HEK293 (cell line): ENCODE measurements at regions of chrX and their contacts with region 1.

Region 1: DNA sequence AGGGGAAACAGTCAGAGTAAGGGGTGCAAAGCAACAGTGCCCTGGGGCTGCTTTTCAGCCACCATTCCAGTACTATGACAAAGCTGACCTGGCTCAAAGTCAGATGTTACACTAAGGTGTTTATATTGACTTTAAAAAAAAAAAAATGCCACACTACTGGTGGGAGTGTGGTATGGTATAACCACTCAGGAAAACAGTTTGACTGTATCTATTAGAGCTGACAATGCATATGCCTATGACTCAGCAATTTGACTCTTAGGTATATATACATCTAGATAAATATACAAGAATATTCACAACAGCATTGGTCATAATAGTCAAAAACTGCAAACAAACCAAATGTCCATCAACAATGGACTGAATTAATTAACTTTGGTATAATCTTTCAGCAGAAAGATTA is 15.0 kb downstream of the ASB9 start:
- H3K4me3 ChIP-seq: no peak overlapping the region
- H3K27ac ChIP-seq: no peak overlapping the region
- H3K4me1 ChIP-seq: no peaks in the 10 kb centered on the region
- CTCF ChIP-seq: no peak

Region 2: DNA sequence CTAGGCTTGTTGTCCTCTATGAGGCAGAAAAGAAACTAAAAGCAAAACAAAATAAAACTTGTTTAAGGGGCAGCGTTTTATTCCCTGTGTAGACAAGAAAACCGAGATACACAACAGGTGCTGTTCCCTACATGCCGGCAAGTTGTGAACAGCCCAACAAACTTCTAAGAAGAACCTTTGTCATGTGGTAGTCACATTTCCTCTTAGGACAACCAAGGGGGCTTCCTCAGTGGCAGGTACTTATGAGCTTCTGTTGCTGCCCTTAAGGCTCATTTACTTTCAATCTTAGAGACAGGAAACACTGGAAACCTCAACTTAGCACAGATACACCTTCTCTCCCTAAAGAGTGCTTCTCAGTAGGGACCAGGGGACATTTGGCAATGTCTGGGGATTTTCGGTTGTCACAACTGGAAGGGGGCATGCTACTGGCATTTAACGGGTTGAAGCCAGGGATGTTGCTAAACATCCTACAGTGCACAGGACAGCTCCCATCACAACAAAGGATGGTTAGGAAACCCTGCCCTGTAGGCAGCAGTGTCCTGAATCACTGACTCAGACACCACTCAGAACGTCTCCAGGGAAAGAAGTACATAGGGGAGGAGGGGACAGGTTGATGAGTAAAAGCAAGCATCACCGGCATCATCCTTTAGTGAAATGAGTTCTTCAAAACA is 96.0 kb before region 1 on chrX:
- CTCF ChIA-PET with region 1: no interaction called
- POLR2A ChIA-PET with region 1: no interaction called
- H3K4me3 ChIP-seq: no peak overlapping the region
- H3K27ac ChIP-seq: no peak overlapping the region
- H3K4me1 ChIP-seq: no peaks in the 10 kb centered on the region
- CTCF ChIP-seq: no peak

Region 3: GRCh38 chrX:15242899-15243555 is 11.8 kb before region 1 on chrX:
- CTCF ChIA-PET with region 1: interaction called, 13 read pairs
- POLR2A ChIA-PET with region 1: no interaction called
- H3K4me3 ChIP-seq: no peak overlapping the region
- H3K27ac ChIP-seq: no peak overlapping the region
- H3K4me1 ChIP-seq: no peaks in the 10 kb centered on the region
- CTCF ChIP-seq: no peak

Region 4: GRCh38 chrX:15790769-15791290 is 536.0 kb after region 1 on chrX:
- CTCF ChIA-PET with region 1: no interaction called
- POLR2A ChIA-PET with region 1: no interaction called
- H3K4me3 ChIP-seq: peak overlapping the region; percentile 79
- H3K27ac ChIP-seq: peak overlapping the region; percentile 71
- H3K4me1 ChIP-seq: peaks cover 4% of the 10 kb centered on the region; the same call in 1 of the 2 replicates
- CTCF ChIP-seq: no peak